WTC11 (cell line): ENCODE measurements at regions of chr11 and their contacts with region 1.

Region 1: DNA sequence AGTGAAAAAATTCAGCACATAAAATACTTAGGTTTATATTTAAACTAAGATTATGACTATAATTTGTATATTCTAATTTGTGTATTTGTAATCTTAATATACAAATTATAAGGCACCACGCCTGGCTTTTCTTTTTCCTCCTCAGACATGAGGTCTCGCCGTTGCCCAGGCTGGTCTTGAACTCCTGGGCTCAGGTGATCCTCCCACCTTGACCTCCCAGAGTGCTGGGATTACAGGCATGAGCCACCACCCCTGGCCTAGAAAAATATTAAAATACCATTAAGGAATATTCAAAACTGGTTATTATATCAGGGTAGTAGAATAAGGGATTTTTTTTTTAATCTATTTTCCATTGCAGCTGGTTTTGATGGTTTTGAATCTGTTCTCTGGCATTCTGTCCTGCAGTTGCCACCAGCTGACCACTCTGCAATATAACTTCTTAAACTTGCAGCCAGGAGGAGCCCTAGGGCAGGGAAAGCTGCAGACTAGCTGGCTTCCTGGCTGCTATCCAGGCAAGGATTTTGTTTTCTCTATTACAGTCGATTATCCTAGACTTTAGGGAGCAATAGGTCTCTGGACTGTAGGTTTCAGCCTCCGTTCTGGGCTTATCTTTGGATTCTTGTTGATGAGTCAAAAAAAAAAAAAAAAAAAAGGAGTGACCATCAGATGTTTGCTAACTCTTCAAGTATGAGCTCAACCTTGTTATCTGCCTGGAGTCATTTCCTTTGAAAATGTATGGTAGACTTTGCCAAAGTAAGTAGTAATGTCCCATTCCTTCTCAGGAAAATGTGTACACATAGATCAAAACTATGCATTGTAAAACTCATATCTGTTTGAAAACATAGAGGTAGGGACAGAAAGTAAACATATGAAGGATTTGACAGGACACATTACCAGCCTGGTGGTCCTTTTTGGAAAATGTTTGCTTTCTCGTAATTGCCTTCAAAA is 13.2 kb downstream of the POLA2 start:
- DNase-seq: peak; percentile 65
- ATAC-seq: peak; percentile 97
- H3K4me3 Mint-ChIP-seq: no peak overlapping the region
- H3K27ac Mint-ChIP-seq: no peak overlapping the region
- H3K4me1 Mint-ChIP-seq: peaks cover 9% of the 10 kb centered on the region
- H3K27me3 Mint-ChIP-seq: no peaks in the 10 kb centered on the region
- CTCF ChIP-seq: peak; percentile 43; the same call in 1 of the 2 replicates

Region 2: DNA sequence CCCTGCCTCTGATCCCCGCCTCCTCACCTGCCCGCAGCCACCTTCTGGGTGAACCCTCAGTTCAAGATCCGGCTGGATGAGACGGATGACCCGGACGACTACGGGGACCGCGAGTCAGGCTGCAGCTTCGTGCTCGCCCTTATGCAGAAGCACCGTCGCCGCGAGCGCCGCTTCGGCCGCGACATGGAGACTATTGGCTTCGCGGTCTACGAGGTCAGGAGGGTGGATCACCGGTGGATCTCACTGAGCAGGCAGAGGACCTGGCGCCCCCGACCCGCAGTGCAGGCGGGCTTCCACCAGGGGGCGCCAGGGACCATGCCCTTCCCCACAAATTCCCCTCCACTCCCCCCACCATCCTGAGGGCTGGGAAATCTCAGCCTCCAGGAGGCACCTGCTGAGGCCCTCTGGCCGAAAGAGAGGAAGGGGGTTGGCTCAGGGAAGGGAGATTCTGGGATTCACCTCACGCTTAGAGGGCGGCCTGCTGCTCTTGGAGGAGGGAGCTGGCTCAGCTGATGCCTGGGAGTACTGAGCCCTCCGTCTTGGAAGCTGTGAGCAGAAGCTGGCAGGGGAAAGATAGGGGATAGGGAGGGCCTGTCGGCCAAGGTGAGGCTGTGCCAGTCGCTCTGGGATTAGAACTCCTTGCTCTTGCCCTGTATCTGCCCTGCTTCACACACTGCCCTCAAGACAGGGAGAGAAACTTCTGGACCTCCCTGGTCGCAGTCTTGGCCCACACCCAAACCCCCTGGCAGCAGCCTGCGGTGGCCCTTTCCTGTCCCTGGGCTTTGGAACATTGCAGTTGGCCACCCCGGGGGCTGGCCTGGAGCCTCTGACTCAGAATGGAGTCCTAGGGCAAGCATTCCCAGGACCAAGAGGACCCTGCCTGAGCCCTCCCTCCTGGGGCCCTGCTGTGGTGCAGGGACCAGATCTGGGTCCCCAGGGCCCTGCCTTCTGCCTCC is 70.1 kb before region 1 on chr11:
- CTCF ChIA-PET with region 1: interaction called, 15 read pairs
- POLR2A ChIA-PET with region 1: interaction called, 7 read pairs
- DNase-seq: peak; percentile 88
- ATAC-seq: peak; percentile 93
- H3K4me3 Mint-ChIP-seq: peak overlapping the region; percentile 60
- H3K27ac Mint-ChIP-seq: peak overlapping the region; percentile 93
- H3K4me1 Mint-ChIP-seq: peaks cover 16% of the 10 kb centered on the region
- H3K27me3 Mint-ChIP-seq: no peaks in the 10 kb centered on the region
- CTCF ChIP-seq: peak; percentile 99

Region 3: GRCh38 chr11:65225279-65226102 is 49.5 kb before region 1 on chr11:
- CTCF ChIA-PET with region 1: interaction called, 10 read pairs
- POLR2A ChIA-PET with region 1: no interaction called
- DNase-seq: peak; percentile 73
- ATAC-seq: peak; percentile 87
- H3K4me3 Mint-ChIP-seq: peak overlapping the region; percentile 81
- H3K27ac Mint-ChIP-seq: peak overlapping the region; percentile 53
- H3K4me1 Mint-ChIP-seq: peaks cover 19% of the 10 kb centered on the region
- H3K27me3 Mint-ChIP-seq: no peaks in the 10 kb centered on the region; the same call in 1 of the 2 replicates
- CTCF ChIP-seq: no peak

Region 4: DNA sequence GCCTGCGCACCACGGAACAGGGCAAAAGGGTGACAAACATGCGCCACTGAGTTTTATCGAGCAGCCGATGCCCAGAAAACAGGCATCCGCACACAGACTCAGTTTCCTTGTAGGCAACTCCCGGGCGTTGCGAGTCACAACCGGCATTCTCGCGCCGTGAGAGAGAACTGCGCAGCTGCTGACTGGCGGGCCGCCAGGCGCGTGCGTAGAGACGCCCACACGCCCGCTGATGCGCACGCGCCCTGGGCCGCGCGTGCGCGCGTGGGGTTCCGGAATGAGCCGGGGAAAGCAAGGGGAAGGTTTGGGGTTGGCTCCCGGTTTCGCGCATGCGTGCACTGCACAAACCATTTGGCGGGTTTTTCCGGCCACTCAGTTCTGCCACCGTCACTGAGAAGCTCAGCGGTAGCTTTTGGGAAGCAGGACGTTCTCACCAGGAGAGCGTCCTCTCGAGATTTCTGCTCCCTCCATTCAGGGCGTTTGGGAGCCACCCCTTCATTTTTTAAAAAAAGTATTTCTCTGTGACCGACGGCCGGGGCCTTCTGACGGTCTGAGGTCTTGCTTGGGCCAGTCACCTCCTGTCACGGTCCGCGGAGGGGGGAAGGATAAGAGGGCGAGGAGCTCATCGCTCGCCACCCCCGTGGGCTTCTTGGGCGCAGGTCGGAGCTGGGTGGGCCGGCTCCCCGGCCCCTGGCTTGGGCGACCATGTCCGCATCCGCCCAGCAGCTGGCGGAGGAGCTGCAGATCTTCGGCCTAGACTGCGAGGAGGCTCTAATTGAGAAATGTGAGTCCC is 13.2 kb before region 1 on chr11 and contains the start of gene POLA2:
- CTCF ChIA-PET with region 1: interaction called, 51 read pairs
- POLR2A ChIA-PET with region 1: interaction called, 4 read pairs
- DNase-seq: peak; percentile 88
- ATAC-seq: peak; percentile 92
- H3K4me3 Mint-ChIP-seq: peak within 1 kb of the TSS; percentile 92
- H3K27ac Mint-ChIP-seq: peak within 1 kb of the TSS; percentile 69
- H3K4me1 Mint-ChIP-seq: peaks cover 18% of the 10 kb centered on the region
- H3K27me3 Mint-ChIP-seq: peaks cover 13% of the 10 kb centered on the region
- CTCF ChIP-seq: no peak
- total RNA-seq, gene POLA2: 26.9 to 35.6 TPM (median 28.5 TPM) in 3 replicates

Region 5: GRCh38 chr11:65301491-65302329 is 26.7 kb after region 1 on chr11:
- CTCF ChIA-PET with region 1: interaction called, 11 read pairs
- POLR2A ChIA-PET with region 1: interaction called, 6 read pairs
- DNase-seq: peak; percentile 71
- ATAC-seq: peak; percentile 92
- H3K4me3 Mint-ChIP-seq: no peak overlapping the region
- H3K27ac Mint-ChIP-seq: no peak overlapping the region; the same call in 1 of the 2 replicates
- H3K4me1 Mint-ChIP-seq: peaks cover 13% of the 10 kb centered on the region
- H3K27me3 Mint-ChIP-seq: no peaks in the 10 kb centered on the region
- CTCF ChIP-seq: no peak

Region 6: GRCh38 chr11:65329944-65330403 is 55.0 kb after region 1 on chr11:
- CTCF ChIA-PET with region 1: interaction called, 150 read pairs
- POLR2A ChIA-PET with region 1: interaction called, 4 read pairs
- DNase-seq: peak; percentile 90
- ATAC-seq: peak; percentile 31
- H3K4me3 Mint-ChIP-seq: peak overlapping the region; percentile 31; the same call in 1 of the 2 replicates
- H3K27ac Mint-ChIP-seq: no peak overlapping the region
- H3K4me1 Mint-ChIP-seq: peaks cover 13% of the 10 kb centered on the region
- H3K27me3 Mint-ChIP-seq: peaks cover 5% of the 10 kb centered on the region
- CTCF ChIP-seq: peak; percentile 79

Region 7: DNA sequence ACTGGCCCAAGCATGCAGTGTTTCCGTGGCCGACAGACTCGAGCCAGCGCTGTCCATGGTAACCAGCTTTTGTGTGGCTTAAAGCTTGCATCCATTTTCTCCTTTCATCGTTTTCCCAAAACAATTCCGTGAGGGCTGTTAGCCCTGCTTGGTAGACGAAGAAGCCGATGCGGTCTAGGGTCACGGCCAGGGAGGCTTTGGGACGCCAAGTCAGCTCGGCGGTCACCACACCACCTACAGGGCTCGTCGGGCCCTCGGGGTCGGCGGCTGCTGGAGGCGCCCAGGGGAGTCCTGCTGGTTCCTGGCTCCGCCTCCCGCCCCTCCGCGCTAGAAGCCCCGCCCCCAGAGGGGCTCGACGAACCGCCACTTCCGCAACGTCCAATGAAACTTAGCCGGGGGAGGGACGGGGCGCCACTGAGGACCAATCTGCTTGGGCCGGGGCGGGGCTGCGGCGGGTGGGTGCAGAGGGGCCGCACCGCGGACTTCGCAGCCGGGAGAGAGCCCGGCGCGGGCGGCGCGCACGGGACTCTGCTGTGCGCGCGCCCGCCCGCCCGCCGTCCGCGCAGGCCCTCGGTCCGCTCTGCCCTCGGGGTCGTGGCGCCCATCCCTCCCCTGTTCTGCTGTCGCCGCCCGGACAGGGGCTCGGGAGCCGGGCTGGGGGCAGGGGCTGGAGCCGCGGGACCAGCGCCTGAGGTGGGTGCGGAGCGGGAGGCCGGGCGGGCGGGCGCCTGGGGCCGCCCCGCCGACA is 79.4 kb after region 1 on chr11 and contains the start of gene TIGD3:
- CTCF ChIA-PET with region 1: interaction called, 14 read pairs
- POLR2A ChIA-PET with region 1: interaction called, 4 read pairs
- DNase-seq: peak; percentile 99
- ATAC-seq: peak; percentile 95
- H3K4me3 Mint-ChIP-seq: peak within 1 kb of the TSS; percentile 81
- H3K27ac Mint-ChIP-seq: peak within 1 kb of the TSS; percentile 19; the same call in 1 of the 2 replicates
- H3K4me1 Mint-ChIP-seq: peaks cover 10% of the 10 kb centered on the region
- H3K27me3 Mint-ChIP-seq: peaks cover 30% of the 10 kb centered on the region
- CTCF ChIP-seq: no peak
- total RNA-seq, gene TIGD3: 1.9 to 2.3 TPM (median 2.1 TPM) in 3 replicates